ENCODE measurements at regions of chr10 and their contacts with region 1.

Region 1: DNA sequence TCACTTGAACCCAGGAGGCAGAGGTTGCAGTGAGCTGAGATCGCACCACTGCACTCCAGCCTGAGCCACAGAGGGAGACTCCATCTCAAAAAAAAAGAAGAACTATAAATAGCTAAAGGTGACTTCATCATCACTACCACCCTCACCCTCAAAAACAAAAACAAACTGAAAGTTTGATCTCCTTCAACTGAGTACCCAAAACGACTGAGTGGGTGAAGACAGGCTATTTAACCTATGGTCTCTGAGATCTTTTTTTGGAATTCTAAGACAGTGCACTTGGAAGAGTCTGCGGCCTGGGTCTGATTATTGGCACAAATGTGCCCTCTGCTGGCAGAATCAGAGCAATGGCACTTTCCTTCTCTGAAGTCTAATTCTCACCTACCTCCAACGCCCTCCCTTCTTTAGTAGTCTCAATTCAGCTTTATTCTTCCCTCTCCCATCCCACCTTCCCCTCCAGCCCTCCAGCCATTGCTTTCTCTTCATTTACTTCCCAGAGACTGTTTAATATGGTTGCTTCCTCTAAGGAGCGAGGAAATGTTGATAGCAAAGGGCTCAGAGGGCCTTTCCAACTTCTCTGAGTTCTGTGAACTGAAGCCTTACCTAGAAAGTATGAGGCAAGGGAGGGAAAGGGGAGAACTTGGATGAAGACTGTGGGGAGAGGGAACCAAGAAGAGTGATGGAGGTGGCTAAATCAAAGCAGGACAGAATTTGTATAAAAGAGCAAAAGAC is 2.9 kb upstream of the MYOZ1 start:
- DNase-seq: peak; percentile 64
- H3K4me3 Mint-ChIP-seq: no peak overlapping the region
- H3K27ac Mint-ChIP-seq: no peak overlapping the region
- H3K4me1 Mint-ChIP-seq: no peaks in the 10 kb centered on the region
- H3K27me3 Mint-ChIP-seq: peaks cover 58% of the 10 kb centered on the region
- CTCF ChIP-seq: peak; percentile 90

Region 2: GRCh38 chr10:73263948-73264347 is 380.2 kb before region 1 on chr10:
- CTCF ChIA-PET with region 1: interaction called, 5 read pairs
- intact Hi-C with region 1: loop called (anchors 2 kb)
- DNase-seq: no peak
- H3K4me3 Mint-ChIP-seq: no peak overlapping the region
- H3K27ac Mint-ChIP-seq: peak overlapping the region; percentile 29
- H3K4me1 Mint-ChIP-seq: peaks cover 24% of the 10 kb centered on the region
- H3K27me3 Mint-ChIP-seq: no peaks in the 10 kb centered on the region
- CTCF ChIP-seq: no peak

Region 3: GRCh38 chr10:73529089-73529832 is 114.9 kb before region 1 on chr10:
- CTCF ChIA-PET with region 1: interaction called, 20 read pairs
- intact Hi-C with region 1: loop called (anchors 1 kb)
- DNase-seq: peak; percentile 60
- H3K4me3 Mint-ChIP-seq: no peak overlapping the region
- H3K27ac Mint-ChIP-seq: no peak overlapping the region
- H3K4me1 Mint-ChIP-seq: no peaks in the 10 kb centered on the region
- H3K27me3 Mint-ChIP-seq: no peaks in the 10 kb centered on the region
- CTCF ChIP-seq: peak; percentile 86

Region 4: DNA sequence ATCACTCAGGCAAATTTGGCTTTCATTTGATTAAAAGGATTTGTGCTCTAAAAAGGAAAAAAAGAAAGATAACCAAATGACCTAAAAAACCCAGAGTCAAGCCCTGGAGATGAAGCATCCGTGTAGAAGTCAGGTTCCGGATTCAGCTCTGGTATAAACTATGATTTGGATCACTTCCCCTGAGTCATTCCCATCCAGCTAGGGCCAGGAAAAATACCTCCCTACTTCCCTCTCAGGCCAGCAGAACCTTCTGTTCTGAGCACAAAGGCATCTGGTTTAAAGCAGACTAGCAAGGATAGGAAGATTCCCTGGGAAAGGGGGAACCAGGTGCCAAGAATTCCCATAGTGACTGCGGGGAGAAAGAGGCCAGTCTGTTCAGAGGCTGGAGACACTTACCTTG is 192.9 kb after region 1 on chr10:
- CTCF ChIA-PET with region 1: no interaction called
- intact Hi-C with region 1: no loop called
- DNase-seq: no peak
- H3K4me3 Mint-ChIP-seq: no peak overlapping the region
- H3K27ac Mint-ChIP-seq: no peak overlapping the region
- H3K4me1 Mint-ChIP-seq: no peaks in the 10 kb centered on the region
- H3K27me3 Mint-ChIP-seq: no peaks in the 10 kb centered on the region
- CTCF ChIP-seq: no peak

Region 5: GRCh38 chr10:73965890-73966768 is 321.9 kb after region 1 on chr10:
- CTCF ChIA-PET with region 1: no interaction called
- intact Hi-C with region 1: no loop called
- DNase-seq: peak; percentile 70
- H3K4me3 Mint-ChIP-seq: peak overlapping the region; percentile 55
- H3K27ac Mint-ChIP-seq: peak overlapping the region; percentile 96
- H3K4me1 Mint-ChIP-seq: peaks cover 16% of the 10 kb centered on the region
- H3K27me3 Mint-ChIP-seq: no peaks in the 10 kb centered on the region
- CTCF ChIP-seq: no peak